Activated CD8-positive, alpha-beta T cell treated with anti-CD3 and anti-CD28 coated beads for 36 hours (primary cell): ENCODE measurements at regions of chr3 and their contacts with region 1.

Region 1: DNA sequence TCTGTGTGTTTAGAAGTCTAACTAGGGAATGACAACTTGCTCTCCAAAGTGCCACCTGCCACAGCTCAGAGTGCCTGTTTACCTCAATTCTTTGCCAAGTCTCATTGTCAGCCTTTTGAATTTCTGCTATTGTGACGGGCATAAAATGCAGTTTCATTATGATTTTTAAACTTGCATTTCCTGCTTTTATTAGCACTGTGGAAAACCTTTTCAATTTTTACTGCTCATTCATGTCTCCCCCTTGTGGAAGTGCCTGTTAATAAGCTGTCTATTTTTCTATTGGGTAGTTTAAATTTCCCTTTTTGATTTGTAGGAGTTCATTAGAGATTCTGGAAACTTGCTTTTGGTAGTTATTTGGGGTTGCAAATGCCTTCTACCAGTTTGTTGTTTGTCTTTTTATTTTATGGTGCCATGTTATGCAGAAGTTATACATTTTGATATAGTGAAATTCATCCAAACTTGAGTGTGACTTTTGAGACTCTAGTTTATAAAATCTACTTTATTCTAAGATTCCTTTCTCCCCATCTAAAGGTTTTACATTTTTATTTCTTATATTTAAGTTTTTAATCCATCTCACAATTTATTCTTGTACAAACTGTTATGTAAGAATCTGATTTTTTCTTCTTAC is 53.9 kb upstream of the FRMD4B start:
- DNase-seq: no peak
- ATAC-seq: no peak
- H3K4me3 Mint-ChIP-seq: no peak overlapping the region
- H3K27ac Mint-ChIP-seq: no peak overlapping the region
- H3K4me1 Mint-ChIP-seq: peaks cover 20% of the 10 kb centered on the region
- H3K27me3 Mint-ChIP-seq: peaks cover 6% of the 10 kb centered on the region
- CTCF ChIP-seq: peak; percentile 63

Region 2: GRCh38 chr3:69324362-69325025 is 115.3 kb before region 1 on chr3:
- CTCF ChIA-PET with region 1: interaction called, 11 read pairs
- POLR2A ChIA-PET with region 1: no interaction called
- intact Hi-C with region 1: no loop called
- DNase-seq: peak; percentile 37
- ATAC-seq: peak; percentile 43
- H3K4me3 Mint-ChIP-seq: no peak overlapping the region
- H3K27ac Mint-ChIP-seq: peak overlapping the region; percentile 43
- H3K4me1 Mint-ChIP-seq: peaks cover 50% of the 10 kb centered on the region
- H3K27me3 Mint-ChIP-seq: no peaks in the 10 kb centered on the region
- CTCF ChIP-seq: peak; percentile 31

Region 3: GRCh38 chr3:69425261-69425660 is 14.5 kb before region 1 on chr3:
- CTCF ChIA-PET with region 1: interaction called, 25 read pairs
- POLR2A ChIA-PET with region 1: interaction called, 3 read pairs
- intact Hi-C with region 1: no loop called
- DNase-seq: peak; percentile 54
- ATAC-seq: peak; percentile 65
- H3K4me3 Mint-ChIP-seq: no peak overlapping the region
- H3K27ac Mint-ChIP-seq: no peak overlapping the region
- H3K4me1 Mint-ChIP-seq: peaks cover 2% of the 10 kb centered on the region
- H3K27me3 Mint-ChIP-seq: peaks cover 2% of the 10 kb centered on the region
- CTCF ChIP-seq: peak; percentile 24

Region 4: DNA sequence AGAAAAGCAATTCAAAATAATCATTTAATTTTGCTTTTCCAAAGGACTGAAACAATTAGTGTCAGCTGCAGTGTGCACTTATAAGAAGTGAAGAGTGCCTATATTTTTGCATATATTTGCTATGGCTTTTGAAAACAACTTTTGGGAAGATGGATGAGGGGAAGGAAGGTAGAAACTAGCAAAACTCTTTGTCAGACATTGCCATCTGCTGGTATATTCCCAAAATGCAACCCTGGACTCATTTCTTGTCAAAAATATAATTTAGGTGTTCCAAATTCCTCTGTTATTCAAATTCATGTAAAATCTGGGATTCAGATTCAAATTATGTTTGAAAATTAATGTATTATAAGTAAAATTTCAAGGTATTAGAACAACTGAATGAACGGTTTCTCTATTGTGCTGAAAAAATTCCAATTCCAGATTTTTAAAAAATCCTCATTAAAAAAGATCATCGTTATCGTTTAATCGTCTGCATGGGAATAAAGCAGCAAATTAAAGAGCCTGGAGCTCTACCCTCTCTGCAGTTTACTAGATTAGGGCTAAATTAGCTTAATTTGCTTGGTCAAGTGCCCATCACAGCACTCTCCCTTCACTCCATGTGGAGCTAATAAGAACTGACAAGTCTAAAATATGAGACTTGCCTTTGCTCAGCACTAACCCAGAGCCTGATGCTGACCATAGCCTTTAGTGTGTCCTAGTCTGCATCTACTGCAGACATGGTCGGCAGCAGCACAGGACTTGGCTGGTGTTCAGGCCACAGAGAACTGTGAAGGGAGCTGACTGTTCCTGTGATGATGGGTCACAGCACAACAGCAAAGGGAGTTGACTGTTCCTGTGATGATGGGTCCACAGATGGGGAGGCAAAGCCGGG is 231.6 kb after region 1 on chr3:
- CTCF ChIA-PET with region 1: interaction called, 3 read pairs
- POLR2A ChIA-PET with region 1: no interaction called
- intact Hi-C with region 1: loop called (anchors 10 kb)
- DNase-seq: peak; percentile 4
- ATAC-seq: no peak
- H3K4me3 Mint-ChIP-seq: no peak overlapping the region
- H3K27ac Mint-ChIP-seq: no peak overlapping the region
- H3K4me1 Mint-ChIP-seq: no peaks in the 10 kb centered on the region
- H3K27me3 Mint-ChIP-seq: no peaks in the 10 kb centered on the region
- CTCF ChIP-seq: peak; percentile 73